Activated T-helper 1 cell treated with anti-CD3 and anti-CD28 coated beads, Interleukin-12 subunit alpha, Interleukin-12 subunit beta, Interleukin-2, Interleukin-4 antibody, amounts not matched to agents 30 ng/mL and 10 ng/mL and 1 ng/mL, durations not matched to agents 14 hours and 24 hours and 36 hours (primary cell): ENCODE measurements at regions of chr5 and their contacts with region 1.

Region 1: DNA sequence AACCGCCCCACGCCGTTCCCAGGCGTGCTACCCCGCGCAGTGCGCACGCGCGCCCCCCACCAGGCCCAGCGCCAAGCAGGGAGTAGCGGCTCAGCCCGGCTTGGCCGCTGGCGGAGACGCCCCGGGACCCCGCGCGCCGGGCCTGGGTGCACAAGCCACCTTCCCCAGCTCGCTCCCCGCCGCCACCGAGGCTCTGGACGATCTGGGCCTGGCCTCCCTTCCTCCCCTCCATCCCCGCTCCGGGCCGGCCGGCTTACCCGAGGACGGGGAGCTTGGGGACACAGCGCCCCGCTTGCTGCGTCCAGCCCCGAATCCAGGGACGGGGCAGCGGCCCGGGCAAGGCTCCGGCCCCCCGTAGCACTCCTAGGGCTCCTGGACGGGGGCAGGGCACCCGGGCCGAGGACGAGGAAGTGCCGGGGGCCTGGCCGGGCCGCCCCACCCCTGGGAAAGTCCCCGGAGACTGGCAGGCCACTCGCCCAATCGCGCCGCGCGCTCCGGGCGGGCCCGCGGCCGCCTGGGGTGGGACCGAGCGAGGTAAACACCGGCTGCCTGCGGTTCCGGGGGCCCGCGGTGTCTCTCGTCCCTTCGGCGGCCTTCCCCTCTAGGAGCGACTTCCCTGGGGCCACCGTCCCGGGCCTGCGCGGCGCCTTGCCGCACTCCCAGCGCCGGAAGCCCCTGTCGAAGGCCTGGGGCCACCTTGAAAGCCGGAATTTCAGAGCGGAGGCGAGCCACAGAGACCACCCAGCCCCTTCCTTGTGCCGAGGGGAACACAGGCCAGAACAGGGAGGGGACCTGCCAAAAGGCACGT is at the start of gene TNIP1:
- DNase-seq: peak; percentile 95
- H3K4me3 Mint-ChIP-seq: peak within 1 kb of the TSS; percentile 91
- H3K27ac Mint-ChIP-seq: peak within 1 kb of the TSS; percentile 93
- H3K4me1 Mint-ChIP-seq: peaks cover 85% of the 10 kb centered on the region
- H3K27me3 Mint-ChIP-seq: no peaks in the 10 kb centered on the region
- total RNA-seq, gene TNIP1: 287 and 304 TPM in 2 replicates

Region 2: GRCh38 chr5:150409638-150410523 is 670.9 kb before region 1 on chr5:
- intact Hi-C with region 1: loop called (anchors 5 kb)
- DNase-seq: peak; percentile 38
- H3K4me3 Mint-ChIP-seq: peak overlapping the region; percentile 91
- H3K27ac Mint-ChIP-seq: peak overlapping the region; percentile 98
- H3K4me1 Mint-ChIP-seq: peaks cover 45% of the 10 kb centered on the region
- H3K27me3 Mint-ChIP-seq: no peaks in the 10 kb centered on the region

Region 3: GRCh38 chr5:150758531-150759333 is 322.1 kb before region 1 on chr5 and contains the start of gene DCTN4:
- intact Hi-C with region 1: loop called (anchors 2 kb)
- DNase-seq: peak; percentile 90
- H3K4me3 Mint-ChIP-seq: no peak within 1 kb of the TSS
- H3K27ac Mint-ChIP-seq: no peak within 1 kb of the TSS
- H3K4me1 Mint-ChIP-seq: peaks cover 34% of the 10 kb centered on the region
- H3K27me3 Mint-ChIP-seq: peaks cover 2% of the 10 kb centered on the region
- total RNA-seq, gene DCTN4: 42.3 and 46.4 TPM in 2 replicates

Region 4: GRCh38 chr5:151068433-151069197 is 12.2 kb before region 1 on chr5:
- intact Hi-C with region 1: loop called (anchors 1 kb)
- DNase-seq: no peak
- H3K4me3 Mint-ChIP-seq: peak overlapping the region; percentile 49
- H3K27ac Mint-ChIP-seq: peak overlapping the region; percentile 88
- H3K4me1 Mint-ChIP-seq: peaks cover 88% of the 10 kb centered on the region
- H3K27me3 Mint-ChIP-seq: no peaks in the 10 kb centered on the region

Region 5: GRCh38 chr5:151115274-151115905 is 34.6 kb after region 1 on chr5:
- intact Hi-C with region 1: loop called (anchors 1 kb)
- DNase-seq: peak; percentile 40
- H3K4me3 Mint-ChIP-seq: no peak overlapping the region
- H3K27ac Mint-ChIP-seq: no peak overlapping the region
- H3K4me1 Mint-ChIP-seq: peaks cover 5% of the 10 kb centered on the region
- H3K27me3 Mint-ChIP-seq: no peaks in the 10 kb centered on the region

Region 6: DNA sequence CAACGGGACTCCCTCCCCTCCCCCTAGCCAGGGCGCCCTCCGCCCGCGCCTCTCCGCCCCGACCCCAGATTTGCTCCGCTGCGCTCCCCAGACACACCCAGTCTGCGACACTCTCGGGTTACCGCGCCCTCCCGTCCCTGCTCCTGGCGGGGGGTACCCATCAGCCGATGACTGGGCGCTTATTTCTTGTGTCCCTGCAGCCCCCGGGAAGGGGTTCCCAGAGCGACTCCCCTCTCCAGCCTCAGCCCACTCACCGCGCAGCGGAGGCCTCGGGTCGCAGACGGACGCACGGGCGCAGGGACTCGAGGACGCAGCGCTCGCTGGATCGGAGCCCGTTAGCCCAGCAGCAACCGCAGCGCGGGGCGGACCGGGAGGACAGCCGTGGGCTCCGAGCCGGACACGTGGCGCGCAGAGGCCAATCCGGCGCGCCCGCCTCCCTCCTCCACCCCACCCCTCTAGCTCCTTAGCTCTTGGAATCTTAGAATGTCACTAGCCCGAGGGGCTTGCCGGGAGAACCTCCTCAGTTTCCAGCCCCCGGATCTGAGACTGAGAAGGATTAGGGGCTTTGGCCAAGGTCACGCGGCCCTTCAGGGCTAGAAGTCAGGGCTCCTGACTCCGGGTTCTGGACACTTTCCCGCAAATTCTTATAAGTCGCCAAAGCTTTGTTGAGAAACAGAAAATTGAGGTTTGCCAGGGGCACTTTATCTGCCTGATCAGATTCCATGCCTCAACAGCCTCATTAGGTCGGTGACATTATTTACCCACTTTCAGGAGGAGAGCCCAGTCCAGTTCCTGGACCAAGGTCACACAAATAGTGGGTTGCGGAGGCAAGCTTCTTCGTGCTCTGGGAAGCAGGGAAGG is 76.8 kb after region 1 on chr5 and contains the start of gene ANXA6:
- intact Hi-C with region 1: loop called (anchors 1 kb)
- DNase-seq: peak; percentile 66
- H3K4me3 Mint-ChIP-seq: peak within 1 kb of the TSS; percentile 94
- H3K27ac Mint-ChIP-seq: peak within 1 kb of the TSS; percentile 92
- H3K4me1 Mint-ChIP-seq: peaks cover 58% of the 10 kb centered on the region
- H3K27me3 Mint-ChIP-seq: peaks cover 2% of the 10 kb centered on the region
- total RNA-seq, gene ANXA6: 286 and 301 TPM in 2 replicates

Region 7: DNA sequence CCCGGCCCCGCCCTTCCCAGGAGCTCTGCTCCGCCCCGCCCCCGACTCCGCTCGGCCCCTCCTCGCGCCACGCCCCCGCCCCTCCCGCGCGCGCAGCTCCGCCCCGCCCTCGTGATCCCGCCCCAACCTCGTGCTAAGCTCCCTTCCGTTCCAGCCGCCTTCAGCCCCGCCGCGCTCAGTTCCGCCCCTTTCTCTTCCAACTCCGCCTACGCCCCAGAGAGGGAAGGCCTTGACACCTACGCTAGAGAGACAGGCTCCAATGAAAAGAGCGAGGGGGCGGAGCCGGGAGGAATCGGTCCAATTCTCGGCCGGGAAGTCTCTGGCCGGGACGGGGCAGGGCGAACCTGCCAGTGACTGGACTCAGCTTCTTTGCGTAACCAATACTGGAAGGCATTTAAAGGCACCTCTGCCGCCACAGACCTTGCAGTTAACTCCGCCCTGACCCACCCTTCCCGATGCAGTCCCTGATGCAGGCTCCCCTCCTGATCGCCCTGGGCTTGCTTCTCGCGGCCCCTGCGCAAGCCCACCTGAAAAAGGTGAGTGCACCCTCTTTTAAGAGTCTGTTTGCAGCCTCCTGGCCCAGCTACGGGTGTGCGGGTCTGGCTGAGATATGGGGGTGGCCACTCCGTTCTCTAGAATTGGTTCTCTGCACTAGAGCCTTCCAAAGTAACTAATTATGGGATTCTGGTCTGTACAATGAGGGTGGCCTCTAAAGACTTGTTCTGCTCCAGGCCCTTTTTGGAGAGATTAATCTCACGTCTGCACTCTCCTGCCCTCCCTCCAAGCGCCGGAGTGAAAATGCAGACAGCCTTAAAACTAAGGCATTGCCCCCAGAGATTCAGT is 172.2 kb after region 1 on chr5 and contains the start of gene GM2A:
- intact Hi-C with region 1: loop called (anchors 2 kb)
- DNase-seq: peak; percentile 99
- H3K4me3 Mint-ChIP-seq: peak within 1 kb of the TSS; percentile 87
- H3K27ac Mint-ChIP-seq: peak within 1 kb of the TSS; percentile 88
- H3K4me1 Mint-ChIP-seq: peaks cover 44% of the 10 kb centered on the region
- H3K27me3 Mint-ChIP-seq: peaks cover 2% of the 10 kb centered on the region
- total RNA-seq, gene GM2A: 16.9 and 21.1 TPM in 2 replicates